Activated naive CD4-positive, alpha-beta T cell treated with anti-CD3 and anti-CD28 coated beads, Interleukin-2, amount 10 ng/mL, durations not matched to agents 7 days and 5 days (primary cell): ENCODE measurements at regions of chr7 and their contacts with region 1.

Region 1: DNA sequence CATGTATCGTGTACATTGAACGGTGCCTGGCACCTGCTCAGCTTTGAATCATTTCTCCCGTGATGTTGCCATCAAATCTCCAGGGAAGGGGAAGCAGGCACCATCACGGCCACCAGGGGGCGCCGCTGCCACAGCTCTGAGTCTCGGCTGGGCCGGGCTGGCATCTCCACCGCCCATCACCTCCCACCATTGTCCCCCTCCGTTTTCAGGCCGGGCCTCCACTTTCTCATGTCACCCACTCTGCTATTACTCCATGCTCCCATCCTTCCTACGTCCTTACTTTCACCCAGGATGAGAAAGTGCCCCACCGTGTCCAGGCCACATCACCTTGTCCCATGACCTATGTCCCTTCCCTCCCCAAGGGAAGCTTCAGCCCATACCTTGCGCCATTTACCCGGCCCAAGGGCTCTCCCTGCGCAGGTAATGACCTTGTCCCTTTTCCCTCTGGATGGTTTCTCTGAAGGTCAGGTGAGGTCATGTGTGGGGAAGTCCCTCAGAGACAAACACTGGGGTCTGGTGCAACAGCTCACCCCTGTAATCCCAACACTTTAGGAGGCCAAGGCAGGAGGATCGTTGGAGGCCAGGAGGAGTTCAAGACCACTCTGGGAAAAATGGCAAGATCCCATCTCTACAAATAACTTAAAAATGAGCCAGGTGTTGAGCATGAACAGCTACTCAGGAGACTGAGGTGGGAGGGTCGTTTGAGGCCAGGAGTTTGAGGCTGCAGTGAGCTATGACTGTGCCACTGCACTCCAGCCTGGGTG is 31.8 kb upstream of the OCM2 start:
- DNase-seq: peak; percentile 84
- H3K4me3 Mint-ChIP-seq: no peak overlapping the region
- H3K27ac Mint-ChIP-seq: no peak overlapping the region
- H3K4me1 Mint-ChIP-seq: peaks cover 5% of the 10 kb centered on the region
- H3K27me3 Mint-ChIP-seq: peaks cover 8% of the 10 kb centered on the region

Region 2: DNA sequence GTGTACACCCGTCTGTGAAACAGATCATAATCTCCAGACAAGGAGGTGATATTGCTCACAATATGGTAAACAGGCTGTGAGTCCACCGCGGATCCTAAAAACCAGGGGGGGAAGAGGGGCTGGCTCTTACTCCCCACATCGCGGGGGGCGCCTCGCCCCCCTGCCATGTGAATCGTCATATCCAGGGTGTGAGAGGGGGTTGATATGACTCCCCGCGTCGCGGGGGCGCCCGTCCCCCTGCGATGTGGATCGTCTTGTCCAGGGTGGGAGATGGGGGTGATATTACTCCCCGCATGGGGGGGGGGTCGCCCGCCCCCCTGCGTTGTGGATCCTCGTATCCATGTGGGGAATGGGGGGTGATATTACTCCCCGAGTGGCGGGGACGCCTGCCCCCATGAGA is 62.7 kb before region 1 on chr7:
- CTCF ChIA-PET with region 1: no interaction called
- DNase-seq: no peak
- H3K4me3 Mint-ChIP-seq: no peak overlapping the region
- H3K27ac Mint-ChIP-seq: no peak overlapping the region
- H3K4me1 Mint-ChIP-seq: no peaks in the 10 kb centered on the region
- H3K27me3 Mint-ChIP-seq: no peaks in the 10 kb centered on the region

Region 3: DNA sequence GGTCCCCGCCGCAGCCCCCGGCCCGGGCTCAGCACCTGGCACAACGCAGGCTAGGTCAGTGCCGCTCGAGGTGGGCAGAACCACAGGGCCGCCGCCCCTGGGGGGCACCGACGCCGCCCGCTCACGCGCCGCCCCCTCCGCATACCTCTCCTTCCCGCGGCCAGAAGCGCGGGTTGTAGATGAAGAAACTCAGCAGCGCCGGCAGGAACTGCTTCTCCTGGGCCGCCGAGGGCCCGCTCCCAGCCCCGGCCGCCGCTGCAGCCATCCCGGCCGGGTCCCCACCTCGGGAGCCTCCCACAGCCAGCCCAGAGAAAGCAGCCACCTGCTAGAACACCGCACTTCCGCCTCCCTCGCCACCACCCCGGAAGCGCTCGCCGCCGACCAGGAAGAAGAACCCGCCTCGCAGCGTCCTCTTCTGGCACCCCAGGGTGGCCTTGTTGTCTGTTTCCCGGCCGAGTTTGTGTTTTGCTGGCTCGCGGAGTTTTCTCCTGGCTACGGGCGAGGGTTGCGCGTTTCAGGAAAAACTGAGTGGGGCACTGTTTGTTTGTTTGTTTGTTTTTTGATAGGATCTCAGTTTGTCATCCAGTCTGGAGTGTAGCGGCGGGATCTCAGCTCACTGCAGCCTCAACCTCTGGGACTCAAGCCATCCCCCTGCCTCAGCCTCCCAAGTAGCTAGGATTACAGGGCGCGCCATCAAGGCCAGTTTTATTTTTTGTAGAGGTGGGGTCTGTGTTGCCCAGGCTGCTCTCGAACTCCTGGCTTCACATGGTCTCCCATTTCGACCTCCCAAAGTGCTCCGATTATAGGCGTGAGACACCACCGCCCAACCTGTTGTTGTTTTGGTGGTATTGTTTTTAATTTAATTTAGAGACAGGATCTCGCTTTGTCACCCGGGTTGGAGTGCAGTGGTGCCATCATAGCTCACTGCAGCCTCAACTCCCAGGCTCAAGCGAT is 49.5 kb before region 1 on chr7:
- CTCF ChIA-PET with region 1: no interaction called
- DNase-seq: peak; percentile 92
- H3K4me3 Mint-ChIP-seq: peak overlapping the region; percentile 95
- H3K27ac Mint-ChIP-seq: peak overlapping the region; percentile 87
- H3K4me1 Mint-ChIP-seq: peaks cover 23% of the 10 kb centered on the region
- H3K27me3 Mint-ChIP-seq: peaks cover 3% of the 10 kb centered on the region

Region 4: DNA sequence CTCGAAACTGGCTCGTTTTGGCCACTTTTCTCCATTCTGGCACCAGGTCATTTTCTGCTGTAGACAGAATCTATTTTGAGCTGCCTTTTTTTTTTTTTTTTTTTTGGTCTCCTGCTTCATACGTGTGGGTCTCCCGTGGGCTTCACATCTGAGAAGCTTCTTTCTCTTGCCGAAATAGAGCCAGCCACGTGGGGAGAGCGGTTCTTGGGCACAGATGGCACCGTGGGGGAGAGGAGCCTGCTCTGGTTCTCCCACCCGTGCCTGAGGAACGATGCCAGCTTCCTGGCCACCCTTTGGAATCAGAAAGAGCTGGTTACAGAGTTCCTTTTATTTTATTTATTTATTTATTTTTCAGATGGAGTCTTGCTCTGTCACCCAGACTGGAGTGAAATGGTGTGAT is 17.0 kb after region 1 on chr7:
- CTCF ChIA-PET with region 1: interaction called, 22 read pairs
- DNase-seq: no peak
- H3K4me3 Mint-ChIP-seq: no peak overlapping the region
- H3K27ac Mint-ChIP-seq: no peak overlapping the region
- H3K4me1 Mint-ChIP-seq: no peaks in the 10 kb centered on the region
- H3K27me3 Mint-ChIP-seq: peaks cover 4% of the 10 kb centered on the region

Region 5: DNA sequence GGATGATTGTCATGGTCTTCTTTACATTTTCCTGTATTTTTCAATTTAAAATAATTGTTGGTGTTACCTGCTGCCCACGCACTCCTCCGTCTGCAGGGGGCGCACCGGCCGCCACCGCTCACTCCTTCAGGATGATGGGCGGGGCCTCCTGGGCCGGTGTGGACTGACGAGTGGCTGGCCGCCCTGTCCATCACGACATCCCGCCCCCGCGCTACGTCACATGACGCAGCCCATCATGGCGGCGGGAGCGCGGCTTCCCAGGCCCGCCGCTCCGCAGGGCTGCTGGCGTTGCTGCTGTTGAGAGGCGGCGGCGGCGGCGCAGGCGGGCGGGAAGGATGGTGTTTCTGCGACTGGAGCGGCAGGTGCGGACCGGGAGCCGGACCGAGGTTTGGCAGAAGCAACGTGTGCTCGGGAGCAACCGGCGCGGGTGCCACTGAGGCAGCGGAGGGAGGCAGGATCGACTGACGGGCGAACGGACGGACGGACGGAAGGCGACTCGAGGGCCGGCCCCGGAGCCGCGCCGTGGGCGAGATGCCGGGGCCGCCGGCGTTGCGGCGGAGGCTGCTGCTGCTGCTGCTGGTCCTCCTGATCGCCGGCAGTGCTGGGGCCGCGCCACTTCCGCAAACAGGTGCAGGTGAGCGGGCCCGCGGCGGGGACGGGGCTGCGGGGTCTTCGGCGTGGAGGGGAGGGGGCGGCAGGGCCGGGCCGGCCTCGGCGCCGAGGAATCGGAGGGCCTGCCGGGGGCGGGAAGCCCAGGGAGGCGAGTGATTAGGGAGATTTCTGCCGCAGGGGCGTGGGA is 85.1 kb after region 1 on chr7 and contains the start of gene LMTK2:
- CTCF ChIA-PET with region 1: interaction called, 13 read pairs
- DNase-seq: peak; percentile 96
- H3K4me3 Mint-ChIP-seq: peak within 1 kb of the TSS; percentile 97
- H3K27ac Mint-ChIP-seq: peak within 1 kb of the TSS; percentile 90
- H3K4me1 Mint-ChIP-seq: peaks cover 25% of the 10 kb centered on the region
- H3K27me3 Mint-ChIP-seq: peaks cover 20% of the 10 kb centered on the region